ENCODE measurements at regions of chr15 and their contacts with region 1.

Region 1: GRCh38 chr15:29183071-29183831 is 86.4 kb downstream of the NSMCE3 start:
- DNase-seq: peak; percentile 19
- H3K4me3 ChIP-seq: no peak overlapping the region
- H3K27ac ChIP-seq: no peak overlapping the region
- H3K4me1 ChIP-seq: no peaks in the 10 kb centered on the region
- H3K27me3 ChIP-seq: no peaks in the 10 kb centered on the region

Region 2: GRCh38 chr15:29062179-29062591 is 121.1 kb before region 1 on chr15:
- in situ Hi-C with region 1: no loop called
- DNase-seq: no peak
- H3K4me3 ChIP-seq: no peak overlapping the region
- H3K27ac ChIP-seq: no peak overlapping the region
- H3K4me1 ChIP-seq: no peaks in the 10 kb centered on the region
- H3K27me3 ChIP-seq: no peaks in the 10 kb centered on the region

Region 3: DNA sequence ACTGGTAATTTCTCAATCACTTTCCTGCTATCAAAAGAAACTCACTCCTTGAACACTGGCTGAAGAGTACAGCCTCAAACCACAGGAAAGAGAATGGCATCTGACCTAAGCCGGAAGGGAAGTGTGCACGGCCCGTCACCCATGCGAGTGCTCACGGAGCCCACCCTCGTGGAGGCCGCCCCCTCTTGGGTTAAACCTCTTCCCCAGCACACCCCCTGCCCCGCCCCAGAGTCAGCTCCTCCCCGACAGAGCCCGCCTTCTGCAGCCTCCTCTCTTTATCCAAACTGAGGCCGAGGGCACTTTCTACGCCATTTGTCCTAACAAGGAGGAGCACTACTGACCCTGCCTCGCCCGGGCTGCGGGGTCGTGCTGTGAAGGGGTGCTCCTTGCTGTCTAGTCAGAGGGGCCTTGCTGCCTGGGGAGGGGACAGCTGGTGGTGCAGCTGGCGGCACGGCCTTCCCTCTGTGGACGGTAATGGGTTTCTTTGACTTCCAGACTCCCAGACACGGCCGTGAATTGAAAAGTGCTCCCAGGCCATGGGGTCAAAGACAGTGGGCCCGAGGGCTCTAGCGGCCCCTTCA is 51.3 kb before region 1 on chr15:
- in situ Hi-C with region 1: loop called (anchors 5 kb)
- DNase-seq: no peak
- H3K4me3 ChIP-seq: no peak overlapping the region
- H3K27ac ChIP-seq: no peak overlapping the region
- H3K4me1 ChIP-seq: no peaks in the 10 kb centered on the region
- H3K27me3 ChIP-seq: peaks cover 3% of the 10 kb centered on the region; the same call in 1 of the 2 replicates

Region 4: GRCh38 chr15:29636140-29636539 is 452.9 kb after region 1 on chr15:
- in situ Hi-C with region 1: no loop called
- DNase-seq: no peak
- H3K4me3 ChIP-seq: no peak overlapping the region
- H3K27ac ChIP-seq: no peak overlapping the region
- H3K4me1 ChIP-seq: no peaks in the 10 kb centered on the region
- H3K27me3 ChIP-seq: peaks cover 14% of the 10 kb centered on the region

Measured in GM23248 (cell line).